PC-9 (cell line): ENCODE measurements at regions of chr5 and their contacts with region 1.

Region 1: GRCh38 chr5:172958331-172959046 is 735 bp upstream of the RPL26L1 start:
- DNase-seq: peak; percentile 55 to 74
- H3K4me3 ChIP-seq: peak overlapping the region; percentile 99
- H3K27ac ChIP-seq: peak overlapping the region; percentile 72
- H3K4me1 ChIP-seq: peaks cover 14% of the 10 kb centered on the region
- H3K27me3 ChIP-seq: no peaks in the 10 kb centered on the region
- CTCF ChIP-seq: no peak

Region 2: DNA sequence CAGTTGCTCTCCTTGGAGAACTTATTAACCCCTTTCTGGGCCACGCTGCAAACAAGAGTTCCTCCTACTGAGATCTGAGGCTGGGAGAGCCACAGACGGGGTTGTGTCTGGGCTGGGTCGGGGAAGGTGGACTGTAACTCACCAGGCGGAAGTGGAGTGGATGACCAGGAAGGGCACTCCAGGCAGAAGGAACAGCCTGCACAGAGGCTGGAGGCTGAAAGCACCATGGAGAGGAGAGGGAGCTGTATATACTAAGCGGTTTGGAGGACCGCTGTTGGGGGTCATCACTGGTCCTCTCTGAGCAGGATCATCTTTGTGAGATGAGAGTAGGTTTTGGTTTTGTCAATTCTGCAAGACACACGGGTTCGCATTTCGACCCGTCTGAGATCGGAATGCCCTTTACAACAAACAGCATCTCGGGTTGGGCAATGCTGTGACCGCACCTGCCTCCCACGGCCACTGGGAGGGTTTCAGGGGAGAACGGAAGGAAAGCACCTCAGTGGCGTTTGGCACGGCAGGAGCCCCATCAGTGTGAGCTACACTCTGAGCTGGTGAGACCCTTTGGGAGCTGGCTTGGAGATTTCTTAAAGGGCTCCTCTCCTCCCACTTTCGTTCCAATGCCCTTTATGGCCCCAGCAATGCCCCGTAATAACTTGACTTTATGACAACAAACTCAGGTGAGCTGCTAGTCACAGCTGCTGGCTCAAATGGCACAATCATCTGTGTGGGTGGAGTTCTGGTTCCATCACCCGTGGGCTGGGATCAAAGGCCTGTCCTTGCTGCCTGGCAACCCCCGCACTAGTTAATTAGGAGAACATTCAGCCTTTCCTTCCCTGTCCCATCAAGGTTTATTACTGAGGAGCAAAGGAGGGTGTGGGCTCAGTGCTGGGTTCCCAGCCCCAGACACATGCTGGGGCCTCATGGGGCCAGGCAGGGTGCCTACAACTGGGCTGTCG is 336.1 kb before region 1 on chr5:
- CTCF ChIA-PET with region 1: no interaction called
- POLR2A ChIA-PET with region 1: no interaction called
- intact Hi-C with region 1: no loop called
- DNase-seq: no peak
- H3K4me3 ChIP-seq: no peak overlapping the region
- H3K27ac ChIP-seq: no peak overlapping the region
- H3K4me1 ChIP-seq: no peaks in the 10 kb centered on the region
- H3K27me3 ChIP-seq: peaks cover 26% of the 10 kb centered on the region
- CTCF ChIP-seq: no peak

Region 3: GRCh38 chr5:173010547-173011464 is 52.3 kb after region 1 on chr5:
- CTCF ChIA-PET with region 1: no interaction called
- POLR2A ChIA-PET with region 1: interaction called, 12 read pairs
- intact Hi-C with region 1: no loop called
- DNase-seq: no peak
- H3K4me3 ChIP-seq: no peak overlapping the region
- H3K27ac ChIP-seq: no peak overlapping the region
- H3K4me1 ChIP-seq: peaks cover 17% of the 10 kb centered on the region
- H3K27me3 ChIP-seq: no peaks in the 10 kb centered on the region
- CTCF ChIP-seq: no peak